Heart right ventricle (tissue), 16 donors: ENCODE measurements at regions of chr14 and their contacts with region 1.

Region 1: GRCh38 chr14:56145965-56146364 is 27.8 kb downstream of the PELI2 start:
- DNase-seq: no peak
- ATAC-seq: no peak
- H3K4me3 ChIP-seq: no peak overlapping the region
- H3K27ac ChIP-seq: no peak overlapping the region
- H3K4me1 ChIP-seq: peaks cover 0 to 36% (median 9%) of the 10 kb centered on the region in 9 donors
- H3K27me3 ChIP-seq: no peaks in the 10 kb centered on the region
- CTCF ChIP-seq: no peak

Region 2: GRCh38 chr14:56181681-56182085 is 35.7 kb after region 1 on chr14:
- intact Hi-C with region 1: no loop called
- DNase-seq: no peak
- ATAC-seq: no peak
- H3K4me3 ChIP-seq: no peak overlapping the region
- H3K27ac ChIP-seq: peak overlapping the region in 2 of 10 donors; percentile 16 to 32
- H3K4me1 ChIP-seq: peaks cover 0 to 23% (median 0%) of the 10 kb centered on the region in 9 donors
- H3K27me3 ChIP-seq: no peaks in the 10 kb centered on the region
- CTCF ChIP-seq: no peak

Region 3: DNA sequence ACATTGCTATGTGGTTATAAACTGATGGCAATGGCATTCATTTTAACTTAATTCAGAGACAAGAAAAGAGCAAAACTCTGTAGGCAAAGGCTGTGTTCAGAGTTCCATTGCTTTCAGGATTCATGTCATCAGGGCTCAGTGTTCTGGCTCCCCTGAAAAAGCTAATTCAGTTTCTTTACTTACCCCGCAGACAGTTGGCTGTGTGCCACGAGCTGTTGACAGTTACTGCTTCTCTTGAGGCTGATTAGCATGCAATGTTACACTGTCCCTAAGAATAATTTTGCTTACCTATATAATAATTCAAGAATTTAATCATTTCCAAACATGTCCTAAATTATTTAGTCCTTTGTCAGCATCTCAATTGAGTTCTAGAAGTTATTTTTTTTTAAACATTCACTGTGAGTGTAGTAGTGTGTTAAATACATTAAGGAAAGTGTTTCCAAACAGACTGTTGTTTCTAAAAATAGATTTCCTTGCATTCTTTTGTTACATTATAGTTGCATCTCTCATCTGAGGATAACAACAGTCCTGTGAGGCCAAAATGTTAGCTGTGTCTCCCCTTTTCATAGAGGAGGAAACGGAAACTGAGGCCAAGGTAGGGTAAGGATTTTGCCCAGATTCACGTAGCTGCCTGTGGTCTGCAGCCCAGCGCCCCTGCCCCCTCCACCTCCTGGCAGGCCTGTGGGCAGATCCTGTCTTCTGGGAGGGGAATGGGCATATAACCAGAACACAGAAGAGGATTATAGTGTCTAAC is 70.8 kb after region 1 on chr14:
- intact Hi-C with region 1: loop called in 1 of 10 experiments (anchors 10 kb)
- DNase-seq: peak; percentile 60 to 62
- ATAC-seq: peak in 4 of 8 donors; percentile 20 to 63 (median 35)
- H3K4me3 ChIP-seq: no peak overlapping the region
- H3K27ac ChIP-seq: peak overlapping the region in 2 of 10 donors; percentile 11 to 16
- H3K4me1 ChIP-seq: peaks cover 11 to 69% (median 52%) of the 10 kb centered on the region in 9 donors
- H3K27me3 ChIP-seq: no peaks in the 10 kb centered on the region
- CTCF ChIP-seq: no peak